B cell (primary cell): ENCODE measurements at regions of chr5 and their contacts with region 1.

Region 1: DNA sequence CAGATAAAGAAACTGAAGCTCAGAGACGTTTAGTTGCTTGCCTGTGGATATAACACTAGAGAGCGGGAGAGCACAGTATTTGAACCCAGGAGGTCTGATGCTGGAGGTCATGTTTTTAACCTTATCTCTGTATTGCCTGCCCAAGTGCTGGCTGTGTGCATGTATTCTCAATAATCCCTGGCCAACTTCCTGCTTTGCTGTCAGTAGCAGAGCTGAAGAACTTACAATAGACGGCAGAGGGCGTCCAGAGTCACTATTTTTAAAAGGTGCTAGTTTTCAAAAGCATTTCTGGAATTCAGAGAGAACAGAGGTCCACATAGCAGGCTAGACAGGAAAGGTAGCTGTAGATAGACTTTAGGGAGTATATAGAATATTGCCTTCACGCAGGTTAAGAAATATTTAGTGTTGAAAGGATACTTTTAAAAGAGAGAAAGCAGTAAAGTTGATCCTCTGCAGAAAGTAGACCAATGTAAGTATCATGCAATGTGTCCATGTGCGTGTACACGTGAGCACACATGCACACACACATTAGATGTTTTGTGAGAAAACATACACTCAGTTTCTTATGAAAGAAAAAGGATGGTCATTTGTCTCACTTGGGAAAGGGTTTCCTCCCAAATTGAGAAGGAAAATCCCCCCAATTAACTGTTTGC is 46.3 kb downstream of the PTCD2 start:
- DNase-seq: peak; percentile 69
- ATAC-seq: peak; percentile 64
- H3K4me3 ChIP-seq: no peak overlapping the region
- H3K4me3 Mint-ChIP-seq: no peak overlapping the region
- H3K27ac ChIP-seq: no peak overlapping the region
- H3K27ac Mint-ChIP-seq: no peak overlapping the region
- H3K4me1 ChIP-seq: no peaks in the 10 kb centered on the region
- H3K4me1 Mint-ChIP-seq: peaks cover 7% of the 10 kb centered on the region
- H3K27me3 ChIP-seq: no peaks in the 10 kb centered on the region
- H3K27me3 Mint-ChIP-seq: no peaks in the 10 kb centered on the region
- CTCF ChIP-seq: peak; percentile 74

Region 2: GRCh38 chr5:72330712-72331111 is 35.7 kb before region 1 on chr5:
- CTCF ChIA-PET with region 1: no interaction called
- POLR2A ChIA-PET with region 1: no interaction called
- intact Hi-C with region 1: no loop called
- DNase-seq: no peak
- ATAC-seq: no peak
- H3K4me3 ChIP-seq: no peak overlapping the region
- H3K4me3 Mint-ChIP-seq: no peak overlapping the region
- H3K27ac ChIP-seq: no peak overlapping the region
- H3K27ac Mint-ChIP-seq: no peak overlapping the region
- H3K4me1 ChIP-seq: no peaks in the 10 kb centered on the region
- H3K4me1 Mint-ChIP-seq: no peaks in the 10 kb centered on the region
- H3K27me3 ChIP-seq: no peaks in the 10 kb centered on the region
- H3K27me3 Mint-ChIP-seq: no peaks in the 10 kb centered on the region
- CTCF ChIP-seq: no peak

Region 3: DNA sequence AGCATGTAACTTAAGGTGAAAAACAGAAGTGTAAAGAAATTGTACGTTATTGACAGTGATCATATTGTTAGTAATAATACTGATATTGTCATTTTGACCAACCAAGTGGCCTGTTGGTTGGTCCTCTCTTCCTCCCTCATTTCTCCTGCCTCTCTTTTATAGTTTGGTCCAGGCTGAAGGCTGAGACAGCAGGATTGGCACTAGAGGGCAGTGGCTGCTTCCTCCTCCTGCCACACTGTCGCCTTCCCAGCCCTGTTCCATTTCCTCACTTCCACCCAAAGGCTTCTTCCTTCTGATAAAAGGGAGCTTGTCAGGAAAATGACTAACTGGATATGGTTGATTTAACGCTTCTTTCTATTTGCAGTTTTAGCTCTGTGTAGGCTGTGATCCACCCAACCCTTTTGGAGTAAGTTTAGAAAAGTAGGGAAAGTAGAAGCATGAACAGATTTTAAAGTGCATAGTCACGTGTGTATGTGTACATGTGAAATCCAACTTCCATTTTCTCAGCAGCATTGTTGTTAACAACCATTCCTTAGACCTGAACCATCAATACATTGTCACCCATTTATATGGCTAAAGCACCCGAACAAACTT is 10.6 kb before region 1 on chr5:
- CTCF ChIA-PET with region 1: interaction called, 10 read pairs
- POLR2A ChIA-PET with region 1: no interaction called
- intact Hi-C with region 1: no loop called
- DNase-seq: no peak
- ATAC-seq: no peak
- H3K4me3 ChIP-seq: no peak overlapping the region
- H3K4me3 Mint-ChIP-seq: no peak overlapping the region
- H3K27ac ChIP-seq: no peak overlapping the region
- H3K27ac Mint-ChIP-seq: no peak overlapping the region
- H3K4me1 ChIP-seq: no peaks in the 10 kb centered on the region
- H3K4me1 Mint-ChIP-seq: no peaks in the 10 kb centered on the region
- H3K27me3 ChIP-seq: no peaks in the 10 kb centered on the region
- H3K27me3 Mint-ChIP-seq: no peaks in the 10 kb centered on the region
- CTCF ChIP-seq: no peak

Region 4: GRCh38 chr5:72523960-72524582 is 157.6 kb after region 1 on chr5:
- CTCF ChIA-PET with region 1: interaction called, 65 read pairs
- POLR2A ChIA-PET with region 1: no interaction called
- intact Hi-C with region 1: no loop called
- DNase-seq: peak; percentile 64
- ATAC-seq: no peak
- H3K4me3 ChIP-seq: no peak overlapping the region
- H3K4me3 Mint-ChIP-seq: no peak overlapping the region
- H3K27ac ChIP-seq: no peak overlapping the region
- H3K27ac Mint-ChIP-seq: no peak overlapping the region
- H3K4me1 ChIP-seq: no peaks in the 10 kb centered on the region
- H3K4me1 Mint-ChIP-seq: no peaks in the 10 kb centered on the region
- H3K27me3 ChIP-seq: no peaks in the 10 kb centered on the region
- H3K27me3 Mint-ChIP-seq: peaks cover 6% of the 10 kb centered on the region
- CTCF ChIP-seq: peak; percentile 65

Region 5: DNA sequence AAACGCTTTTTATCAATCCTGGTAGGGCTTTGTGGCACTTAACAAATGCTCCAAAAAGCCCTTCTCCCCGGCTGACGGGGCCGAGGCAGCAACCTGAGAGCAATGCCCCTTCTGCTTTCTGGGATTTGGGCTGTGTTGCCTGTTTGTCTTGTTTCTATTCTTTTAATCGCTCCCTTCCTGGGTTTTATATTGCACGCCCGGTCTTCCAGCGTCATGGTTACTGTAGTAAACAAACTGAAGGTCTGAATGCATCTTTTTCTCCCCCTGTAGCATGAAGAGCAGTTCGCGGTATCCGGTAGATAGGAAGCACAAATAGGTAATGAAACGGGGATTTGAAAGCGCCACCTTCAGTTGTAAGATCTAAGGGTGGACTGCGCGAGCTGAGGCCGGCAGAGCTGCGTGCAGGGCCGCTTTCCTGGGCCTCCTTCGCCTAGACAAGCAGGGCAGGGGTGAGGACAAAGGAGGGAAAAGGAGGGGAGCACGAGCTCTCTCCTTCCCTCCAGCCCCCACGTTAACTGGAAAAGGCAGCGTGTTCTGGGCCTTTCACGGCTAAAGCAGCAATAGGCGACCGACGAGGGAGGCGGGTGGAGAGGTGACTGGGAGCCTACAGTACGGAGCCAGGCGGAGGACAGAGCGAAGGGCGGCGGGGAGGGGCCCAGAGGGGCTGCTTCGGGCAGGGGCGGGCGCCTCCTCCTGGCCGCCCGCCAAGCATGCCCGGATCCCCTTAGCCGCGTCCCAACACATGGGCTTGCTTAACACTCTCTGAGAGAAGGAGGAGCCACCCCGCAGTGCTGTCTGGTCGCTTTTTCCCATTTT is 190.1 kb after region 1 on chr5:
- CTCF ChIA-PET with region 1: interaction called, 7 read pairs
- POLR2A ChIA-PET with region 1: no interaction called
- intact Hi-C with region 1: loop called (anchors 1 kb)
- DNase-seq: peak; percentile 62
- ATAC-seq: peak; percentile 86
- H3K4me3 ChIP-seq: peak overlapping the region; percentile 36 to 58 (median 46)
- H3K4me3 Mint-ChIP-seq: peak overlapping the region; percentile 85
- H3K27ac ChIP-seq: peak overlapping the region in 1 of 2 donors; percentile 22
- H3K27ac Mint-ChIP-seq: no peak overlapping the region
- H3K4me1 ChIP-seq: peaks cover 12 to 16% of the 10 kb centered on the region in 2 donors
- H3K4me1 Mint-ChIP-seq: peaks cover 16% of the 10 kb centered on the region
- H3K27me3 ChIP-seq: peaks cover 0 to 17% (median 2%) of the 10 kb centered on the region in 4 experiments
- H3K27me3 Mint-ChIP-seq: peaks cover 38% of the 10 kb centered on the region
- CTCF ChIP-seq: no peak